MCF 10A (cell line): ENCODE measurements at regions of chr1 and their contacts with region 1.

Region 1: DNA sequence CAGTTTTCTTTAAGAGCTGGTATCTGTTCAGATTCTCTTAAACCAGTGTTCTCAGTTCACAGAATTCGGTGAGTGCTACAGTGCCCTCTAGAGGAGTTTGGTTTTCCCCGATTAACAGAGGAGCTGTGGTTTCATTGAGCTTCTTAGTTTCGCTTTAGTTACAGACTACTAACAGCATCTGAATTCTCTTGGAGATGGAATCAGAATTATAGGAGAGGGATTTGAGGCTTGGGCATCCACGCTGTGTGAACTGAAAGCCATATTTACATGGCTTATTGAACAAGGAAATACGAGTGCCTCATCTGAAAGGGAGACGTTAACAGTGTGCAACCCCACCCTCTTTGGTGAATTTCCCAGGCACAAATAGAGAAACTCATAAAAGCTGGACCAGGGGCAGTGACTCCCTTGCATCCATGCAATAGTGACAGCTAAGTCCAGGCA is 202.0 kb downstream of the USH2A start:
- DNase-seq: peak; percentile 90
- H3K4me3 Mint-ChIP-seq: peak overlapping the region; percentile 65
- H3K27ac Mint-ChIP-seq: no peak overlapping the region
- H3K4me1 Mint-ChIP-seq: no peaks in the 10 kb centered on the region
- H3K27me3 Mint-ChIP-seq: peaks cover 74% of the 10 kb centered on the region
- CTCF ChIP-seq: peak; percentile 92

Region 2: GRCh38 chr1:215682232-215682631 is 539.0 kb before region 1 on chr1:
- CTCF ChIA-PET with region 1: interaction called, 16 read pairs
- POLR2A ChIA-PET with region 1: no interaction called
- intact Hi-C with region 1: no loop called
- DNase-seq: peak; percentile 33
- H3K4me3 Mint-ChIP-seq: no peak overlapping the region
- H3K27ac Mint-ChIP-seq: no peak overlapping the region
- H3K4me1 Mint-ChIP-seq: no peaks in the 10 kb centered on the region
- H3K27me3 Mint-ChIP-seq: peaks cover 47% of the 10 kb centered on the region
- CTCF ChIP-seq: peak; percentile 44

Region 3: GRCh38 chr1:215888159-215888558 is 333.1 kb before region 1 on chr1:
- CTCF ChIA-PET with region 1: interaction called, 3 read pairs
- POLR2A ChIA-PET with region 1: no interaction called
- intact Hi-C with region 1: loop called (anchors 2 kb)
- DNase-seq: peak; percentile 43
- H3K4me3 Mint-ChIP-seq: no peak overlapping the region
- H3K27ac Mint-ChIP-seq: no peak overlapping the region
- H3K4me1 Mint-ChIP-seq: no peaks in the 10 kb centered on the region
- H3K27me3 Mint-ChIP-seq: peaks cover 93% of the 10 kb centered on the region
- CTCF ChIP-seq: peak; percentile 26

Region 4: DNA sequence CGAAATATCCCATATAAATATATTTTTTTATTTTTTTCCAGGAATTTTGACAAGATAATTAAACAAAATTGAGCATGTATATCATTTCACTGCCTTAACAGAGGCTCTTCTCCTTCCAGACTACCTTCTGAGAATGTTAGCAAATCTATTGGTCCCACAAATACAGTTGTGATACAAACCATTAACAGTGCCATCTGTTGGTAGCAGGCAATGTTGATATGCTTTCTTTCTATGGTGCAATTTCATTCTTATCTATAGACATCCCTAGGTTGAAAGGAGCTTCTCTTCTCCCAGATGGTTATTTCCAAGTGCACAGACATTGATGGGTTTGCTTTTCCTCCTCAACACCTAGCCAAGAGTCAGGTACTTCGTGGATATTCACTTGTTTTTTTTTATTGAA is 101.7 kb before region 1 on chr1:
- CTCF ChIA-PET with region 1: interaction called, 24 read pairs
- POLR2A ChIA-PET with region 1: no interaction called
- intact Hi-C with region 1: loop called (anchors 2 kb)
- DNase-seq: peak; percentile 62
- H3K4me3 Mint-ChIP-seq: no peak overlapping the region
- H3K27ac Mint-ChIP-seq: no peak overlapping the region
- H3K4me1 Mint-ChIP-seq: no peaks in the 10 kb centered on the region
- H3K27me3 Mint-ChIP-seq: peaks cover 82% of the 10 kb centered on the region
- CTCF ChIP-seq: peak; percentile 80

Region 5: GRCh38 chr1:216210081-216210480 is 11.2 kb before region 1 on chr1:
- CTCF ChIA-PET with region 1: interaction called, 44 read pairs
- POLR2A ChIA-PET with region 1: interaction called, 4 read pairs
- intact Hi-C with region 1: no loop called
- DNase-seq: peak; percentile 24
- H3K4me3 Mint-ChIP-seq: no peak overlapping the region
- H3K27ac Mint-ChIP-seq: no peak overlapping the region
- H3K4me1 Mint-ChIP-seq: no peaks in the 10 kb centered on the region
- H3K27me3 Mint-ChIP-seq: peaks cover 98% of the 10 kb centered on the region
- CTCF ChIP-seq: no peak

Region 6: DNA sequence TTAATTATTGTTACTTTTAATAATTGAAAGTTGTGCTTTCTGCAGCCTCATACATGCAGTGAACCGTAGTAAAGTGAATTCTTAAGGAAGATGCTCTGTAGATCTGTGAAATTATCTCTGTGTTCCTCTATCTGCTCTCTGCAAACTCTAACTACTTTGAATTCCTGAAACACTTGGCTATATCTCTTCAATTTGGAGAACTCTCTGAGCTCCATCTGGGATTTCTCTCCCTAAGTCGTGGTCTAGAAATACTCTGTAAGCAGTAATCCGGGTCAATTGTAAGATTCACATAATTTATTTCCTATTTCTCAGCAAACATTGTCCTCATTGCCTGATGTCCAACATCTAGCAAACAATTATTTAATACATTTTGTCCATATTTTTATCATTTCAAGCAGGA is 37.1 kb after region 1 on chr1:
- CTCF ChIA-PET with region 1: interaction called, 14 read pairs
- POLR2A ChIA-PET with region 1: interaction called, 3 read pairs
- intact Hi-C with region 1: no loop called
- DNase-seq: no peak
- H3K4me3 Mint-ChIP-seq: no peak overlapping the region
- H3K27ac Mint-ChIP-seq: no peak overlapping the region
- H3K4me1 Mint-ChIP-seq: no peaks in the 10 kb centered on the region
- H3K27me3 Mint-ChIP-seq: peaks cover 99% of the 10 kb centered on the region
- CTCF ChIP-seq: no peak